ENCODE measurements at regions of chr3 and their contacts with region 1.

Region 1: DNA sequence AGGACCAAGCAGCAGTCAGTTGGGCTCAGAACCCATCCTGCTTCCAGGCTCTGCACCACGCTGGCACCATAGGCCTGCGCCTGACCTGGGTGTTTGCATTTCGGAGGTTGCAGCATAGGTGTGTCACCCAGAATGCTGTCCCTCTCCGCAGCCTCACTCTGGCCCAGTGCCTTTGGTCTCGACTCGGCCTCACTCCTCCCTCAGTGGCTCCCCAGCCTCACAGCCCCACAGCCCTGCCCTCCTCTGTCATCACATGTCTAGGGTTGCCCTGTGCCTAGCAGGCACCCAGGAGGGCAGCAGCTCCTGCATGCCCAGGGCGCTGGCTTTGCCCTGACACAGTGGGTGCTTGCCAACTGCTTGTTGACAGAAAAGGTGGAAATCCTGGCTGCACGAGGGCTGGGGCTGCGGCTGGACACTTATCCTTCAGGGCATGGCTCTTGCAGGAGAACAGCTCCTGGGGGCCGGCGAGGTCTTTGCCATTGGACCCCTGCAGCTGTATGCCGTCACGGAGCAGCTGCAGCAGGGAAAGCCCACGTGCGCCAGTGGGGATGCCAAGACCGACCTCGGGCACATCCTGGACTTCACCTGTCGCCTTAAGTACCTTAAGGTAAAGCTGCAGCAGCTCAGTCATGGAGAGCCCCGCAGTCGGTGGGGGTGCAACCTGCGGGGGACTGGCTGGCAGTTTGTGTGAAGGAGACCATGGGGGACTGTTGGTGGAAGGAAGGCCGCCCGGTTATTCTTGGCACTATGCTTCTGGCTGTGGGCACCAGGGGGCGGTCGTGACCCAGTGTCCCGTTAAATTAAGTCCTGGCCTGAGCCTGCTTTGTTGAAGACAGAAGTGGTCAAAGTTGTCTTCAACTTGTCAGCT is 16.2 kb downstream of the NISCH start:
- DNase-seq: peak; percentile 30
- ATAC-seq: peak; percentile 90
- H3K4me3 ChIP-seq: no peak overlapping the region
- H3K27ac ChIP-seq: no peak overlapping the region
- H3K4me1 ChIP-seq: peaks cover 6% of the 10 kb centered on the region; the same call in 1 of the 2 replicates
- H3K27me3 ChIP-seq: no peaks in the 10 kb centered on the region
- CTCF ChIP-seq: peak; percentile 60
- POLR2A ChIP-seq: no peak
- RAD21 ChIP-seq: peak; percentile 68

Region 2: GRCh38 chr3:52536369-52537164 is 65.0 kb after region 1 on chr3 and contains the start of gene UQCC5:
- CTCF ChIA-PET with region 1: no interaction called
- POLR2A ChIA-PET with region 1: no interaction called
- dilution Hi-C with region 1: no loop called
- in situ Hi-C with region 1: no loop called
- intact Hi-C with region 1: loop called (anchors 2 kb)
- DNase-seq: peak; percentile 98
- ATAC-seq: peak; percentile 79
- H3K4me3 ChIP-seq: peak within 1 kb of the TSS; percentile 81
- H3K27ac ChIP-seq: peak within 1 kb of the TSS; percentile 83
- H3K4me1 ChIP-seq: peaks cover 23% of the 10 kb centered on the region
- H3K27me3 ChIP-seq: no peaks in the 10 kb centered on the region
- CTCF ChIP-seq: no peak
- POLR2A ChIP-seq: peak; percentile 98
- RAD21 ChIP-seq: no peak
- total RNA-seq, gene UQCC5: 1.1 and 1.4 TPM in 2 replicates

Region 3: GRCh38 chr3:52685709-52686691 is 214.4 kb after region 1 on chr3 and contains the starts of genes GNL3 and PBRM1:
- CTCF ChIA-PET with region 1: no interaction called
- POLR2A ChIA-PET with region 1: no interaction called
- dilution Hi-C with region 1: no loop called
- in situ Hi-C with region 1: no loop called
- intact Hi-C with region 1: loop called (anchors 5 kb)
- DNase-seq: peak; percentile 96
- ATAC-seq: peak; percentile 94
- H3K4me3 ChIP-seq: peak within 1 kb of the TSS; percentile 89
- H3K27ac ChIP-seq: peak within 1 kb of the TSS; percentile 92
- H3K4me1 ChIP-seq: peaks cover 9% of the 10 kb centered on the region
- H3K27me3 ChIP-seq: no peaks in the 10 kb centered on the region
- CTCF ChIP-seq: no peak
- POLR2A ChIP-seq: peak; percentile 95
- RAD21 ChIP-seq: no peak
- total RNA-seq, gene GNL3: 66.0 and 117 TPM in 2 replicates
- total RNA-seq, gene PBRM1: 72.6 and 74.2 TPM in 2 replicates

Measured in IMR-90 (cell line).